CD8-positive, alpha-beta T cell (primary cell): ENCODE measurements at regions of chr3 and their contacts with region 1.

Region 1: GRCh38 chr3:66495646-66496045 is 5.2 kb downstream of the LRIG1 start:
- DNase-seq: no peak
- ATAC-seq: no peak
- H3K4me3 ChIP-seq: no peak overlapping the region
- H3K4me3 Mint-ChIP-seq: no peak overlapping the region
- H3K27ac ChIP-seq: no peak overlapping the region
- H3K27ac Mint-ChIP-seq: no peak overlapping the region
- H3K4me1 ChIP-seq: peaks cover 45% of the 10 kb centered on the region
- H3K4me1 Mint-ChIP-seq: peaks cover 85% of the 10 kb centered on the region
- H3K27me3 ChIP-seq: peaks cover 0 to 4% of the 10 kb centered on the region in 2 experiments
- H3K27me3 Mint-ChIP-seq: peaks cover 8% of the 10 kb centered on the region
- CTCF ChIP-seq: no peak

Region 2: DNA sequence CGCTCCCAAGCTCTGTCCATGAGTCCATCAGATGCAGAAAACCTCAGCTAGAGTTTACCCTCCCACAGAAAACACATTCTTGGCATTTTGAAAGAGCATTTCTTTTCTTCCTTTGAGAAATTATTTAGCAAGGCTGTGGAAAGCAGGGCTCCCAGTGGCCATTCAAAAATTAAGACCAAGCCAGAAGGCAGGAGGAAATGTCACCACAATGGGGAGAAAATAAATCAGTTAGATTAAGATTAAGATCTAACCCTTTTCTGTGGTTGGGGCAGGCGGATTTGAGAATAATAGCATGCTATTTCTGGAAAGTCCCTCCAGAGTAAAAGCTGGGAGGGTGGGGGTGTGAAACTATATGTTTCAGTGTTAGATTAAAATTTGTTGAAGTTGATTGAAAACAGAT is 15.0 kb before region 1 on chr3:
- CTCF ChIA-PET with region 1: interaction called, 4 read pairs
- POLR2A ChIA-PET with region 1: interaction called, 9 read pairs
- intact Hi-C with region 1: loop called (anchors 2 kb)
- DNase-seq: peak in 3 of 9 experiments; percentile 45 to 77 (median 70)
- ATAC-seq: peak; percentile 66
- H3K4me3 ChIP-seq: no peak overlapping the region
- H3K4me3 Mint-ChIP-seq: peak overlapping the region; percentile 51
- H3K27ac ChIP-seq: no peak overlapping the region
- H3K27ac Mint-ChIP-seq: peak overlapping the region; percentile 32
- H3K4me1 ChIP-seq: peaks cover 32% of the 10 kb centered on the region
- H3K4me1 Mint-ChIP-seq: peaks cover 69% of the 10 kb centered on the region
- H3K27me3 ChIP-seq: no peaks in the 10 kb centered on the region
- H3K27me3 Mint-ChIP-seq: no peaks in the 10 kb centered on the region
- CTCF ChIP-seq: no peak